CD4-positive, alpha-beta T cell (primary cell): ENCODE measurements at regions of chr5 and their contacts with region 1.

Region 1: GRCh38 chr5:78359831-78360673 is at the start of gene SCAMP1:
- DNase-seq: peak; percentile 80 to 96 (median 90)
- ATAC-seq: peak; percentile 79
- H3K4me3 ChIP-seq: peak within 1 kb of the TSS; percentile 96
- H3K4me3 Mint-ChIP-seq: peak within 1 kb of the TSS; percentile 91
- H3K27ac ChIP-seq: peak within 1 kb of the TSS; percentile 86 to 87
- H3K27ac Mint-ChIP-seq: peak within 1 kb of the TSS; percentile 83
- H3K4me1 ChIP-seq: peaks cover 23% of the 10 kb centered on the region
- H3K4me1 Mint-ChIP-seq: peaks cover 53% of the 10 kb centered on the region
- H3K27me3 ChIP-seq: no peaks in the 10 kb centered on the region
- H3K27me3 Mint-ChIP-seq: no peaks in the 10 kb centered on the region
- CTCF ChIP-seq: peak; percentile 27
- total RNA-seq, gene SCAMP1: 16.0 to 18.4 TPM

Region 2: GRCh38 chr5:77491783-77492652 is 868.0 kb before region 1 on chr5 and contains the start of gene WDR41:
- CTCF ChIA-PET with region 1: no interaction called
- POLR2A ChIA-PET with region 1: interaction called, 9 read pairs
- intact Hi-C with region 1: loop called in 1 of 2 experiments (anchors 5 kb)
- DNase-seq: peak; percentile 66 to 94 (median 82)
- ATAC-seq: peak; percentile 92
- H3K4me3 ChIP-seq: peak within 1 kb of the TSS; percentile 95
- H3K4me3 Mint-ChIP-seq: peak within 1 kb of the TSS; percentile 96
- H3K27ac ChIP-seq: peak within 1 kb of the TSS; percentile 70 to 72
- H3K27ac Mint-ChIP-seq: peak within 1 kb of the TSS; percentile 69
- H3K4me1 ChIP-seq: peaks cover 11% of the 10 kb centered on the region
- H3K4me1 Mint-ChIP-seq: peaks cover 24% of the 10 kb centered on the region
- H3K27me3 ChIP-seq: no peaks in the 10 kb centered on the region
- H3K27me3 Mint-ChIP-seq: peaks cover 33% of the 10 kb centered on the region
- CTCF ChIP-seq: peak; percentile 91
- total RNA-seq, gene WDR41: 4.2 to 4.4 TPM

Region 3: DNA sequence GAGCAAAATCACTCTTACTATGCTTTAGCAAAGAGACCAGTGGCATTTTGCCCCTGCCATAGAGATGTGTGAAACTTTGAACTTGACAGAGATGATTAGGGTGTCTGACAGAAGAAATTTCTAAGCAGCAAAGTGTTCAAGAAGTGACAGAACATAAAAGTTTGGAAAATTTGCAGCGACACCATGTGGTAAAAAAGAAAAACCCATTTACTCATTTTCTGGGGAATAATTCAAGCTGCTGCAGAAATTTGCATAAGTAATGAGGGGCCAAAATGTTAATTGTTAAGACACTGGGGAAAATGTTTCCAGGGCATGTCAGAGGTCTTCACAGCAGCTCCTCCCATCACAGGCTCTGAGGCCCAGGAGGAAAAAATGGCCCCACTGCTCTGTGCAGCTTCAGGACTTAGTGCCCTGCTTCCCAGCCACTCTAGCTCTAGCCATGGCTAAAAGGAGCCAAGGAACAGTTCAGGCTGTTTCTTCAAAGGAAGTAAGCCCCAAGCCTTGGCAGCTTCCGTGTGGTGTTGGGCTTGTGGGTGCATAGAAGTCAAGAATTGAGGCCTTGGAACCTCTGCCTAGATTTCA is 59.5 kb before region 1 on chr5:
- CTCF ChIA-PET with region 1: interaction called, 46 read pairs
- POLR2A ChIA-PET with region 1: interaction called, 253 read pairs
- intact Hi-C with region 1: no loop called
- DNase-seq: peak in 3 of 14 experiments; percentile 33 to 54 (median 51)
- ATAC-seq: no peak
- H3K4me3 ChIP-seq: no peak overlapping the region
- H3K4me3 Mint-ChIP-seq: no peak overlapping the region
- H3K27ac ChIP-seq: no peak overlapping the region
- H3K27ac Mint-ChIP-seq: no peak overlapping the region
- H3K4me1 ChIP-seq: peaks cover 4% of the 10 kb centered on the region
- H3K4me1 Mint-ChIP-seq: peaks cover 4% of the 10 kb centered on the region
- H3K27me3 ChIP-seq: no peaks in the 10 kb centered on the region
- H3K27me3 Mint-ChIP-seq: peaks cover 9% of the 10 kb centered on the region
- CTCF ChIP-seq: peak; percentile 45

Region 4: DNA sequence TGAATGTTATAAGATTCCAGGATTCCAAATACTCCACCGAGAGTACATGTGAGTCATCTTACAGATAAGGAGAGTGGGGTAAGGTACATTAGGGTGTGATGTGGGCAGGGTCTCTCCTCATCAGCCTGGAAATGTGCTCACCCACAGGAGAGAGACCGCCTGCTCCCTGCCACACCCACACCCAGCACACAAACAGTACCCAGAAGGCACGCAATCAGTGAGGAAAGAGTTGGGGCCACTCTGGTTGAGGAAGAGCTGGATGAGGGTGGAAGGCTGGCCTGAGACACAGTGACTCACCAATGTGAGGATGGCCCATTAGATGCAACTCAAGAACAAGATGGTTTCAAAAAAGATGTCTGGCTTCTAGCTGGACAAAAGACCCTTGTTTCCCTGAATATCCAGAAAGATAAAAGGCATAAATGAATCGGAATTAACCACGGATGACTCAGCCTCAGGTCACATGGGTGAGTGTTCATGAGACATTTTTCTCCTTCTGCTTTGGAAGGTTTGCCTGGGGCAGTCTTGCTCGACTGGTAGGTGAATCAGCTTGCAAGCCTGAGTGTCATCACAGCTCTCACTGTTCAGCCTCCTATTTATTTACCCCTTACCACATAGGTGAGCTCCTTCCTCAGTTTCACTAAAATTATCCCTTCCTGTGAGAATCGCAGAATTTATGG is 339.7 kb after region 1 on chr5:
- CTCF ChIA-PET with region 1: no interaction called
- POLR2A ChIA-PET with region 1: no interaction called
- intact Hi-C with region 1: no loop called
- DNase-seq: peak in 3 of 14 experiments; percentile 0 to 48 (median 29)
- ATAC-seq: no peak
- H3K4me3 ChIP-seq: no peak overlapping the region
- H3K4me3 Mint-ChIP-seq: no peak overlapping the region
- H3K27ac ChIP-seq: no peak overlapping the region
- H3K27ac Mint-ChIP-seq: no peak overlapping the region
- H3K4me1 ChIP-seq: no peaks in the 10 kb centered on the region
- H3K4me1 Mint-ChIP-seq: no peaks in the 10 kb centered on the region
- H3K27me3 ChIP-seq: no peaks in the 10 kb centered on the region
- H3K27me3 Mint-ChIP-seq: no peaks in the 10 kb centered on the region
- CTCF ChIP-seq: no peak

Region 5: GRCh38 chr5:79151942-79152671 is 792.1 kb after region 1 on chr5:
- CTCF ChIA-PET with region 1: no interaction called
- POLR2A ChIA-PET with region 1: no interaction called
- intact Hi-C with region 1: no loop called
- DNase-seq: no peak
- ATAC-seq: no peak
- H3K4me3 ChIP-seq: no peak overlapping the region
- H3K4me3 Mint-ChIP-seq: no peak overlapping the region
- H3K27ac ChIP-seq: no peak overlapping the region
- H3K27ac Mint-ChIP-seq: no peak overlapping the region
- H3K4me1 ChIP-seq: no peaks in the 10 kb centered on the region
- H3K4me1 Mint-ChIP-seq: no peaks in the 10 kb centered on the region
- H3K27me3 ChIP-seq: no peaks in the 10 kb centered on the region
- H3K27me3 Mint-ChIP-seq: no peaks in the 10 kb centered on the region
- CTCF ChIP-seq: no peak